BJ (cell line): ENCODE measurements at regions of chr9 and their contacts with region 1.

Region 1: GRCh38 chr9:131590908-131591844 is 45.9 kb downstream of the PRRT1B start:
- DNase-seq: no peak
- H3K4me3 ChIP-seq: no peak overlapping the region
- H3K27me3 ChIP-seq: no peaks in the 10 kb centered on the region
- CTCF ChIP-seq: peak; percentile 90

Region 2: GRCh38 chr9:131432597-131433306 is 158.4 kb before region 1 on chr9:
- CTCF ChIA-PET with region 1: no interaction called
- POLR2A ChIA-PET with region 1: no interaction called
- DNase-seq: peak; percentile 79
- H3K4me3 ChIP-seq: no peak overlapping the region
- H3K27me3 ChIP-seq: no peaks in the 10 kb centered on the region
- CTCF ChIP-seq: 0 out of 2 replicates have a peak, but pooled peaks have one; percentile 9

Region 3: GRCh38 chr9:131523451-131524435 is 67.4 kb before region 1 on chr9:
- CTCF ChIA-PET with region 1: no interaction called
- POLR2A ChIA-PET with region 1: no interaction called
- DNase-seq: no peak
- H3K4me3 ChIP-seq: no peak overlapping the region
- H3K27me3 ChIP-seq: no peaks in the 10 kb centered on the region
- CTCF ChIP-seq: no peak

Region 4: DNA sequence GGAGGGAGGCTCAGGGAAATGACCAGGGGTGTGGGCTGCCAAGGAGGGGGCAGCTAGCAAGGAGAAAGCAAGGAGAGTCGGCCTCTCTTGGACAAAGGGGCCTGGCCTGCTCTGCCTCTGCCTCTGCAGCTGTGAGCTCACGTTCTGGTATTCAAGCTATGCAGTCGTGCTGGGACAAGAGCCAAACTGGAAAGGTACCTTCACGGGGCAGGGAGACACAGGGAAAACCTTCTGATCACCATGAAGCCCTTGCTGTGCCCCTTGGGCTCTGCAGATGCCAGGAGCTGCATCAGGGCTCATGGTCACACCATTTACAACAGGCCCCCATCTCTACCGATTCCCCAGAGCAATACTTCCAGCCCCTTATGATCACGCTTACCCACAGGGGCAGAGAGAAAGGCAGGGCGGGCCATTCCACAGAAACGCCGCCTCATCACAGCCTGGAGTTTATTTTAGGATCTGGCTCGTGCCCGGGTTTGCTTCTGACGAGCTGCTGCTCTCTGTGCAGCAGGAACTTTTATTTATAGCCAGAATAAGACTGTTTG is 17.4 kb after region 1 on chr9:
- CTCF ChIA-PET with region 1: interaction called, 35 read pairs
- POLR2A ChIA-PET with region 1: no interaction called
- DNase-seq: peak; percentile 55
- H3K4me3 ChIP-seq: no peak overlapping the region
- H3K27me3 ChIP-seq: no peaks in the 10 kb centered on the region
- CTCF ChIP-seq: no peak

Region 5: DNA sequence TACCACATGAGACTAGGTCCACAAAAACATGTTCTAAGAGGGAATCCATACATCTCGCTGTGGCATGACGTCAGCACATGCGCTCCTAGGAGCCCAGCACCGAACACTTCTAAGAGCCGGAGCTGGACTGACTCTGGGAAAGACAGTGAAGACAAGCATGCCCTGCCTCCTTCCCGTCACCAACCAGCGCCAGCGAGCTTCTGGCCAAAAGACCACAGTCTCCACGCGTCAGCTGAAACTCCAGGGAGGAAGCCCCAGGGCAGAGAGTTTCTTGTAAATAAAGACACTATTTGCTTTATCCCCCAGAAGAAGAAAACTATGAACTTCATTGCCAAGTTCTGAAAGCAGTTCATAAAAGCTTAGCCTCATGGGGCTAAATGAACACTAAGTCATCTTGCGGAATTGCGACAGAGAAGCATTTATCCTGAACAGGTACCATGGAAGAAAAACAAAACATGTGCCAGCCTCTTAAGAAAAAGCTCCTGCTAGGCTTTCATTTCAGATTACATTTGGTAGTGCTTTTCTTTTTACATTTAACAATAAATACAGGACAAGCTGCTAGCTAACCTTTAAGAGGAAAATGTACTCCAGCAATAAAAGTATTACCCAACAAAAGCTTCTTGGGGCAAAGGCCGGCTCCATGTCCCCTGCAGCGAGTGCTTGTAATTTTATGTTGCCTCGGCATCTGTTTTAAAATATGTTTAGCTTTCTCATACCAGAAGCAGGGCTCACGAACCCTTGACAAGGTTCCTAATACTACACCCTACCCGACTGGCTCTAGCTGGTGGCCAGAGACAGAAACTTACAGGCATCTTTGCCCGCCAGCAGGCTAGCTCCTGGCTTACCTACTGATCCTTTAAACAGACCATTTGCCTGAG is 50.7 kb after region 1 on chr9:
- CTCF ChIA-PET with region 1: interaction called, 11 read pairs
- POLR2A ChIA-PET with region 1: no interaction called
- DNase-seq: peak; percentile 78
- H3K4me3 ChIP-seq: no peak overlapping the region
- H3K27me3 ChIP-seq: no peaks in the 10 kb centered on the region
- CTCF ChIP-seq: peak; percentile 34

Region 6: GRCh38 chr9:131678499-131679111 is 87.4 kb after region 1 on chr9:
- CTCF ChIA-PET with region 1: interaction called, 10 read pairs
- POLR2A ChIA-PET with region 1: no interaction called
- DNase-seq: peak; percentile 92
- H3K4me3 ChIP-seq: no peak overlapping the region
- H3K27me3 ChIP-seq: no peaks in the 10 kb centered on the region
- CTCF ChIP-seq: peak; percentile 7; the same call in 1 of the 2 replicates

Region 7: GRCh38 chr9:131733541-131734061 is 142.4 kb after region 1 on chr9:
- CTCF ChIA-PET with region 1: interaction called, 227 read pairs
- POLR2A ChIA-PET with region 1: no interaction called
- DNase-seq: peak; percentile 68
- H3K4me3 ChIP-seq: no peak overlapping the region
- H3K27me3 ChIP-seq: no peaks in the 10 kb centered on the region
- CTCF ChIP-seq: no peak

Region 8: DNA sequence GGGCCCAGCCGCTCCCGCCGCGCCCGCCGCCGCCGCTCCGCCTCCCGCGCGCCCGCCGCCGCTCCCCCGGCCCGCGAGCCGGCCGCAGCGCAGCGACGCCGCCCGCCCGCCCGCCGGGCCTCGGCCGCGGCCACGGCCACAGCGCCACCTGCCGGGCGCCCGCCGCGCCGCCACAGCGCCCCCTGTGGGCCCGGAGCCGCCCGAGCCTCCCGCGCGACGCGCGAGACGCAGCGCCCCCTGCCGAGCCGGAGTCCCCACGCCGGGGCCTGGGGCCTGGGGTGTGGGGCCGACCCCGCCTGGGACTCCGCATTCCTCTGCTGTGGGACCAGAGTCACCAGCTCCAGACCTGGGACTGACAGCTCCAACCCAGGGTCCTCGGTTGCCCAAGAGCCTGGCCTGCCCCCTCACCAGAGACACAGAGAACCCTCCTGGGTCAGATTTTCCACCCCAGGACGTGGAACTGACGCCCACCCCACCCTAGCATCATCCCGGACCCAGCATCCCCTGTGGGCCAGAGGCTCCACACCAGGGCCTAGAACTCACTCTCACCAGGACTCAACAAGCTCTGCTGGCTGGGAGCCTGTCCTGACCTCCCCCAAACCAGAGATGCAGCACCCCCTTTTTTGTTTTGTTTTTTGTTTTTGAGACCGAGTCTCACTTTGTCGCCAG is 148.9 kb after region 1 on chr9 and contains the start of gene RAPGEF1:
- CTCF ChIA-PET with region 1: interaction called, 227 read pairs
- POLR2A ChIA-PET with region 1: no interaction called
- DNase-seq: no peak
- H3K4me3 ChIP-seq: peak within 1 kb of the TSS; percentile 56
- H3K27me3 ChIP-seq: peaks cover 2% of the 10 kb centered on the region
- CTCF ChIP-seq: peak; percentile 62
- polyA plus RNA-seq, gene RAPGEF1: 26.9 and 31.6 TPM in 2 replicates

Region 9: DNA sequence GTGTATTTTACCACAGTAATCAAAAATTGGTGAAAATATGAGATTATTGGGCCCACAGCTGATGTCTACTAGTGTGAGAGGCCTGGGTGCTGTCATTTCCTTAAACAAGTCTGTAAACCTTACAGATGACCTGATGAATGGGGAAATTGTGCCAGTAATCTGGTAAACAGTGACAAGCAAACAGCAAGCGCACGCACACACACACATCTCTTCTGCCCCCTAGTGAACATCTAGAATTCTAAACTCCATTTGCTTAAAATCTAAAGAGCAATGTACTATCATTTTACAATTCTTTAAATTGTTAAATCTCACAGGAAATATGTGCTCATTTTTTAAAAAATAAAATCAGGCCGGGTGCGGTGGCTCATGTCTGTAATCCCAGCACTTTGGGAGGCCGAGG is 156.2 kb after region 1 on chr9:
- CTCF ChIA-PET with region 1: interaction called, 227 read pairs
- POLR2A ChIA-PET with region 1: no interaction called
- DNase-seq: peak; percentile 26
- H3K4me3 ChIP-seq: no peak overlapping the region
- H3K27me3 ChIP-seq: peaks cover 4% of the 10 kb centered on the region
- CTCF ChIP-seq: peak; percentile 69